ENCODE measurements at regions of chr11 and their contacts with region 1.

Region 1: GRCh38 chr11:86068951-86069407 is at the start of gene PICALM:
- DNase-seq: peak; percentile 98
- H3K4me3 Mint-ChIP-seq: peak within 1 kb of the TSS; percentile 100
- H3K27ac Mint-ChIP-seq: peak within 1 kb of the TSS; percentile 88
- H3K4me1 Mint-ChIP-seq: peaks cover 26% of the 10 kb centered on the region
- H3K27me3 Mint-ChIP-seq: no peaks in the 10 kb centered on the region
- total RNA-seq, gene PICALM: 194 to 199 TPM

Region 2: GRCh38 chr11:86041975-86042378 is 27.0 kb before region 1 on chr11:
- CTCF ChIA-PET with region 1: interaction called, 38 read pairs
- POLR2A ChIA-PET with region 1: interaction called, 12 read pairs
- DNase-seq: peak; percentile 52
- H3K4me3 Mint-ChIP-seq: no peak overlapping the region
- H3K27ac Mint-ChIP-seq: peak overlapping the region; percentile 1
- H3K4me1 Mint-ChIP-seq: peaks cover 67% of the 10 kb centered on the region
- H3K27me3 Mint-ChIP-seq: no peaks in the 10 kb centered on the region

Region 3: DNA sequence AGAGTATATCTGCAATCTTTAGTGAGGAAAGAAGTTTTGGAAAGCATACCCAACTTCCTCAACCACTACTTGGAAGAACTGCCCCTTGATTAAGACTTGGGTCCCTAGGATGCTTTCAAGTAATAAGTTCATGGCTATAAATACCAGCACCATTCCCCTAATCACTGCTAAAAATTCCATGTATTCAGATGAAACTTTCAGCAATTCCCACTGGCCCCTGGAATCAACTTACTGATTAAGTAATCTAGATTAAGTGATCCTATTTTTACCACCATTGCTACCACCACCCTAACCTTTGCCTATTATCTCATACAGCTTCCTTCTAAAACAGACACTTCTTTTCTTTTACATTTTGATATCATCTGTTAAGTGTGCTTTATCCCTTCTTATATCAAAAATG is 10.6 kb before region 1 on chr11:
- CTCF ChIA-PET with region 1: interaction called, 8 read pairs
- POLR2A ChIA-PET with region 1: interaction called, 11 read pairs
- DNase-seq: no peak
- H3K4me3 Mint-ChIP-seq: no peak overlapping the region
- H3K27ac Mint-ChIP-seq: peak overlapping the region; percentile 3
- H3K4me1 Mint-ChIP-seq: peaks cover 89% of the 10 kb centered on the region
- H3K27me3 Mint-ChIP-seq: no peaks in the 10 kb centered on the region

Region 4: DNA sequence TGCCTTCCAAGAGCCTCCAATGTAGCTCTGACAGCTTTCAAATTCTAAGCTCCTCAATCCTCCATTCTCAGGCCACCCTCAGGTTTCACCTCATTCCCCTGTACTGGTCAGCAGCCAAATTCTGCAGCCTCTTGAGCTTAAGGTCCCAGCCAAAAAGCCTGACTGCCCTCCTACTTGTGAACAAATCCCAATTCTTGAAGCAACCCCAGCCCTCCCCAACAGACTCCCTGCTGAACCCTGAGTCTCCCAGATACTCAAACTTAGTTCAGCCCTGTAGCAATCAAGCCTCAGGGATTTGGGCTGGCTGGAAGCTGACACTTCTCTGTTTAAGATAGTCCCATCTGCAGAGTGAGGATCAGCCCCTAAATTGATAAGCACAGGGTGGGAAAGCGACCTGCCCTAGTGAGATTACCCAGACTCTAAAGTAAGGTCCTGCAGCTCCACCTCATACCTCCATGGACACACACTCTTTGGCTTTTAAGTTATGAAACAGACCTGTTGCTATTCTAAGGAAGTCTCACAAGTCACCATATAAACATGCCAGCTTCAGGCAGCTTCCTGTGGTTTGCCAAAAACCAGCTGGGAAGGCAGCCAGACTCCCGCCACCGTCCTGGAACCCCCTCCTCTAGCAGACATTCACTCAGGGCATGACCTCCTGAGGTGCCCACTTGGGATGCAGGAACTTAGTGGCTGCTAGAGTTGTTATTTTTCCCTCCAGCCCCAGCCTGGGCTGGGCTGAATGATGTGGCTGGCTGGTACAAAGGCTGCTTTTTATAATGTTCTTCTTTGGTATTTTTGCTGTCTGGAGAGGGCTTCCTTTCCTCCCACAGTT is 82.4 kb after region 1 on chr11:
- CTCF ChIA-PET with region 1: no interaction called
- POLR2A ChIA-PET with region 1: interaction called, 12 read pairs
- DNase-seq: no peak
- H3K4me3 Mint-ChIP-seq: no peak overlapping the region
- H3K27ac Mint-ChIP-seq: peak overlapping the region; percentile 59
- H3K4me1 Mint-ChIP-seq: peaks cover 45% of the 10 kb centered on the region
- H3K27me3 Mint-ChIP-seq: no peaks in the 10 kb centered on the region

Region 5: DNA sequence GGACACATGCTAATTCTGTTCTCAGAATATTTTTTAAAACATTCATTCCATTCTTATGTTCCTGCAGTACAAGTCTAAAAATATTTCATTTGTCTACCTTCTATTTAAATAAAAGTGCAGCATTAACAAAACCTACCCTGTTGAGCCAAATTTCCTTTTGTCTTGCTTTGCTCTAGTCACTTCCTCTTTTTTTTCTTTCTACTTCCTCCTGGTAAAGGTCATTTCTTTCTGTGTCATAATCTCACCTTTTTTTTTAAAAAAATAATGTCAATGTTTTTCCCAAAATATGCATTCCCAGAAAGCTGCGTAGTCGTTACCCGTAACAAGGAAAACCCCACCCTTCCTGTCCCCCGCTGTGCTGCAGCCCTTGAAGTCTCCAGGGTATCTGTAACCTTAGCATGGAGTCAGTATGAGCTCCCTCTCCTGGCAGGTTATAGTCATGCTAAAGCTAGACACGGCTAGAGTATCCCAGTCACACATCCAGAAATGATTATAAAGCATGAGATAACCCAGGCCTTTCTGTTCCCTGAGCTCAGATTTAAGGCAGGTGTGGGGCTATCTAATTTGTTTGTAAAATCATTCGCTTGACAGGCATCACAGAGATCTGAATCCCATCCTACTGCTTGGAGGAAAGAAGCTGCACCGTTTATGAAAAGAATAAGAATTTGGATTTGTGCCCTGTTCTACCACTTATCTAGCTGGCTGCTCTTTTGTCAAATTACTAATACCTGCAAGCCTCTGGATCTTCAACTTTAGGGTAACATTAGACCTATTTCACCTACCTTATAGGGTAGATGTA is 124.5 kb after region 1 on chr11:
- CTCF ChIA-PET with region 1: interaction called, 84 read pairs
- POLR2A ChIA-PET with region 1: interaction called, 40 read pairs
- DNase-seq: peak; percentile 78
- H3K4me3 Mint-ChIP-seq: peak overlapping the region; percentile 60
- H3K27ac Mint-ChIP-seq: peak overlapping the region; percentile 80
- H3K4me1 Mint-ChIP-seq: peaks cover 57% of the 10 kb centered on the region
- H3K27me3 Mint-ChIP-seq: peaks cover 2% of the 10 kb centered on the region

Region 6: DNA sequence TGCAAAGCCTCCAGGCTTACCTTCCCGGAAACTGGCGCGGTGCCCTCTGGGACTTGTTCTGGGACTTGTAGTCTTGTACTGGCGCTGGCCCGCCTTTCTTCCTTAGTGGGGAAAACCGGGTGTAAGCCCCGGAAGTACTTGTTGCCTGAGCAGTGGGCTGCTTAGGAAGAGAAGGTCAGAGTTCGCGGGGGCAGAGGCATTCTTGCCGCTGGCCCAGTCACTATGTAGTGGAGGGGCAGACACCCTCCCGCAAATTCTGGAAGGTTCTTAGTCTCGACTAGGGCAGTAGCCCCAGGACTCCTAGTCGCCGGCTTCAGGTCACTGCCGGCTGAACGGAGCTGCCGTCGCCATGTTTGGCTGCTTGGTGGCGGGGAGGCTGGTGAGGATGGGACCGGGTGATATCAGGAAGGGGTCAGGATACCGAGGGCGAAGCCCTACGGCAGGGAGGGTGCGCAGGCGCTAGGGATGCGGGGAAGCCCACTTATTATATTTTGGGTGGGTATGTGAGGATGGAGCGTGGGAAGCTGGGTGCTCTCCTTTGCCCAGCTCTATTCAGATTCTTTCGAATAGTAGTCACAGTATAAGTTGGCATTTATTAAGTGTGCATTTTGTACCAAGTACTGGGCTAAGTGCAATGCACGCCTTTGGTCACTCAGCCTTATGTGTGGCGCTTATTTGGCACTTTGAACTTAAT is 233.3 kb after region 1 on chr11 and contains the start of gene HIKESHI:
- CTCF ChIA-PET with region 1: no interaction called
- POLR2A ChIA-PET with region 1: interaction called, 10 read pairs
- DNase-seq: peak; percentile 89
- H3K4me3 Mint-ChIP-seq: peak within 1 kb of the TSS; percentile 100
- H3K27ac Mint-ChIP-seq: peak within 1 kb of the TSS; percentile 88
- H3K4me1 Mint-ChIP-seq: peaks cover 28% of the 10 kb centered on the region
- H3K27me3 Mint-ChIP-seq: peaks cover 5% of the 10 kb centered on the region
- total RNA-seq, gene HIKESHI: 40.6 to 44.5 TPM